ENCODE measurements at regions of chr20 and their contacts with region 1.

Region 1: GRCh38 chr20:50929299-50930138 is 1.7 kb downstream of the ADNP start:
- H3K4me3 Mint-ChIP-seq: peak overlapping the region; percentile 95
- H3K27ac Mint-ChIP-seq: peak overlapping the region; percentile 96
- H3K4me1 Mint-ChIP-seq: peaks cover 50% of the 10 kb centered on the region
- H3K27me3 Mint-ChIP-seq: no peaks in the 10 kb centered on the region

Region 2: GRCh38 chr20:50790651-50791277 is 138.8 kb before region 1 on chr20:
- intact Hi-C with region 1: loop called (anchors 2 kb)
- H3K4me3 Mint-ChIP-seq: no peak overlapping the region
- H3K27ac Mint-ChIP-seq: peak overlapping the region; percentile 75
- H3K4me1 Mint-ChIP-seq: peaks cover 17% of the 10 kb centered on the region
- H3K27me3 Mint-ChIP-seq: peaks cover 18% of the 10 kb centered on the region

Region 3: GRCh38 chr20:50837532-50838506 is 91.7 kb before region 1 on chr20:
- intact Hi-C with region 1: no loop called
- H3K4me3 Mint-ChIP-seq: no peak overlapping the region
- H3K27ac Mint-ChIP-seq: no peak overlapping the region
- H3K4me1 Mint-ChIP-seq: no peaks in the 10 kb centered on the region
- H3K27me3 Mint-ChIP-seq: no peaks in the 10 kb centered on the region

Region 4: GRCh38 chr20:50958615-50959542 is 29.4 kb after region 1 on chr20 and contains the start of gene MOCS3:
- intact Hi-C with region 1: loop called (anchors 1 kb)
- H3K4me3 Mint-ChIP-seq: peak within 1 kb of the TSS; percentile 92
- H3K27ac Mint-ChIP-seq: peak within 1 kb of the TSS; percentile 95
- H3K4me1 Mint-ChIP-seq: peaks cover 29% of the 10 kb centered on the region
- H3K27me3 Mint-ChIP-seq: no peaks in the 10 kb centered on the region